Mammary epithelial cell (primary cell): ENCODE measurements at regions of chr19 and their contacts with region 1.

Region 1: GRCh38 chr19:33683841-33684535 is 62.2 kb downstream of the CHST8 start:
- DNase-seq: peak; percentile 55
- H3K4me3 ChIP-seq: no peak overlapping the region
- H3K27ac ChIP-seq: no peak overlapping the region
- H3K4me1 ChIP-seq: no peaks in the 10 kb centered on the region
- H3K27me3 ChIP-seq: peaks cover 4% of the 10 kb centered on the region
- CTCF ChIP-seq: no peak

Region 2: DNA sequence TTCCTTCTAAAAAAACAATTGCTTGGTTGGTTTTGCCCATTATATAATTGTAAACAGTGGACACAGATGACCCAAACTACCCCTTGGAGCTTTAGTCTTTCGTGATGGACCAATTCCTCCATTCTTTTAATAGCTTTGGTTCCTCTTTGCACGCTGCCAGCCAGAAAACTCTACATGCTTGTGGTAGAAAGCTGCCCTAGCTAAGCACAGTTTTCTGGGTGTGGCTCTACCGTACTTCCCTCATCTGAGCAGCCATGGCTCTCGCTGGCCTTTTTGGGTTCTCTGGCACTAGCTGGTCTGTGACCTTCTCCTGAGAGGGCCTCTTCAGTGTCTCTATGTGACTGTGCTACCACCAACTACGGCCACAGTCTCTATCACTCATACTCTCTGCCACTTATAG is 351.7 kb before region 1 on chr19:
- CTCF ChIA-PET with region 1: no interaction called
- dilution Hi-C with region 1: no loop called
- in situ Hi-C with region 1: no loop called
- intact Hi-C with region 1: no loop called
- DNase-seq: no peak
- H3K4me3 ChIP-seq: no peak overlapping the region
- H3K27ac ChIP-seq: no peak overlapping the region
- H3K4me1 ChIP-seq: no peaks in the 10 kb centered on the region
- H3K27me3 ChIP-seq: no peaks in the 10 kb centered on the region
- CTCF ChIP-seq: no peak

Region 3: GRCh38 chr19:33587150-33587549 is 96.8 kb before region 1 on chr19:
- CTCF ChIA-PET with region 1: no interaction called
- dilution Hi-C with region 1: loop called (anchors 5 kb)
- in situ Hi-C with region 1: no loop called
- intact Hi-C with region 1: no loop called
- DNase-seq: no peak
- H3K4me3 ChIP-seq: no peak overlapping the region
- H3K27ac ChIP-seq: no peak overlapping the region
- H3K4me1 ChIP-seq: no peaks in the 10 kb centered on the region
- H3K27me3 ChIP-seq: no peaks in the 10 kb centered on the region
- CTCF ChIP-seq: no peak